ENCODE measurements at regions of chr15 and their contacts with region 1.

Region 1: DNA sequence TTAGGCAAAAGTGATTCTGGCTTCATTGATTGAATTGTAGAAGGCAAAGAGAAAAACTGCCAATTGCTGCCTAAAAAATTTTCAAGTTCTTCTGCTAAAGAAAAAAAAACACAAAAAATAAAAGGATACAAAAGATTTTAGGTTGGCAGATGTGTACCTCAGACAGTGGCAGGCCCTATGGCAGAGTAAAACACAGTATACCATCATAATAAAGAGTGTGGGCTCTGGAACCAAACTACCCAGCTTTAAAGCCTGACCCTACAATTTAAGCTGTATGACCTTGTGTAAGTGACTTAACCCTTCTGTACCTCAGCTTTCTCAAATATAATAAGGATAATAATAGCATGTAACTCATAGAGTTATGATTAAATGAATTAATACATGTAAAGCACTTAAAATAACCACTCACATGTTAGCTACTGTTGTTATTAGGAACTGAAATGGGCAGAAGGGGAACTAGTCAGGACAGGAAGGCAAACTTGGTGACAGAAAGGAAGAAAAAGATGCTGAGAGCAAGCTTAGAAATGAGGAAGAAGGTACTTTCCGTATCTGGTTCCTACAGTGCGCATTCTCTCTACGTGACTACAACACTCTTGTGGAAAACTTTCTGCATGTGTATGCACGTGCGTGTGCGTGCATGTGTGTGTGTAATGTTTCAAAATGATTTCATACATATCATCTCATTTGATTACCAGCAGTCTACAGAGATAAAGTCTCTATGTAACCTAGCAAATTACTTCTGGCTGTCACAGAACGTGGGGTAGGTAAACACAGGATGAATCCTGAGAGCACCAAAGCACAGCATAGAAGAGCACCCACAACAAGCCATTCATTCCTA is 13.6 kb upstream of the GATM start:
- DNase-seq: no peak
- H3K4me3 ChIP-seq: no peak overlapping the region
- H3K27ac ChIP-seq: no peak overlapping the region
- H3K4me1 ChIP-seq: no peaks in the 10 kb centered on the region
- H3K27me3 ChIP-seq: peaks cover 0 to 5% (median 0%) of the 10 kb centered on the region in 4 experiments; a peak in 2 of 7 replicates
- CTCF ChIP-seq: no peak
- EP300 ChIP-seq: no peak
- POLR2A ChIP-seq: no peak
- RAD21 ChIP-seq: no peak

Region 2: GRCh38 chr15:45205192-45205591 is 186.8 kb before region 1 on chr15:
- CTCF ChIA-PET with region 1: interaction called, 97 read pairs
- POLR2A ChIA-PET with region 1: no interaction called
- DNase-seq: peak in 1 of 2 experiments; percentile 77
- H3K4me3 ChIP-seq: no peak overlapping the region
- H3K27ac ChIP-seq: no peak overlapping the region
- H3K4me1 ChIP-seq: no peaks in the 10 kb centered on the region
- H3K27me3 ChIP-seq: no peaks in the 10 kb centered on the region
- CTCF ChIP-seq: peak; percentile 81 to 97 (median 93)
- EP300 ChIP-seq: no peak
- POLR2A ChIP-seq: no peak
- RAD21 ChIP-seq: peak; percentile 95

Region 3: GRCh38 chr15:45314960-45315359 is 77.0 kb before region 1 on chr15:
- CTCF ChIA-PET with region 1: interaction called, 10 read pairs
- POLR2A ChIA-PET with region 1: no interaction called
- DNase-seq: no peak
- H3K4me3 ChIP-seq: no peak overlapping the region; a peak in 1 of 8 replicates
- H3K27ac ChIP-seq: no peak overlapping the region
- H3K4me1 ChIP-seq: no peaks in the 10 kb centered on the region
- H3K27me3 ChIP-seq: no peaks in the 10 kb centered on the region
- CTCF ChIP-seq: peak in 2 of 3 experiments; percentile 36 to 53; a peak in 3 of 4 replicates
- EP300 ChIP-seq: no peak
- POLR2A ChIP-seq: no peak
- RAD21 ChIP-seq: peak; percentile 40 to 58

Region 4: DNA sequence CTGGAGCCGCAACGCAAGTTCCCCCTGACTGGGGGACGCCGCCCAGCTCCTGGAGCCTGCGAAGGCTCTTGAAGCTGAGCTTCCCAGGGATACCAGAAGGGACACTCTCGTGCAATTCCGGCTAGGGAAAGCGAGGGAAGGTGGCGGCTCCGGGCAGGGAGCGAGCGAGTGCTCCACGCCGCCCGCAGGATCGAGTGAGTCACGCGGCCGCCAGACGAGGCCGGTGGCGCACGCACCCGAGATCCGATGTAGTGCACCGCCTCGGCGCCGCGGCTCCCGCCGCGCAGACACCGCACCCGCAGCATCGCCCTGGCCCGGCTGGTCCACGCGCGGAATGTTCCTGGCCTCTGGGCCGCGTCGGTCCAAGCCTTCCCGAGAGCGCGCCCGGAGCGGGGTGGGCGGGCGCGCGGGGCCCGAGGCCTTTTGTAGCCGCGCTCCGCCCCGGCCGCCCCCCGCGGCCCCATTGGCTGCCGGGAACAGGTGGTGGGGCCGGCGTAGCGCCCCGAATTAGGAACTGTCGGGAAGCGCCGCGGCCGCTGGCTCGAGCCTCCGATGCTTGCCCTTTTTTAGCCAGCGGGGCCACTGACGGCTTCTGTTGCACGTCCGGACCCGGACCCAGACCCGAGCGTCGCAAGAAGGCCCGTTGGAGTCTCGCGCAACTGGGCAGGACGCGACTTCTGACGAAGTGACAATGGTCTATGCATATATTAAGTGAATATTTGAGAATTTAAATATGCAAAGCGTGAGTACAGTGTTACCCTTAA is 13.6 kb before region 1 on chr15 and contains the start of gene GATM:
- CTCF ChIA-PET with region 1: interaction called, 60 read pairs
- POLR2A ChIA-PET with region 1: interaction called, 4 read pairs
- DNase-seq: peak in 1 of 2 experiments; percentile 77
- H3K4me3 ChIP-seq: peak within 1 kb of the TSS; percentile 48 to 73 (median 64)
- H3K27ac ChIP-seq: no peak within 1 kb of the TSS
- H3K4me1 ChIP-seq: peaks cover 0 to 2% (median 0%) of the 10 kb centered on the region in 4 experiments; a peak in 2 of 7 replicates
- H3K27me3 ChIP-seq: peaks cover 10 to 40% (median 34%) of the 10 kb centered on the region in 4 experiments
- CTCF ChIP-seq: peak; percentile 42 to 56 (median 45); a peak in 3 of 4 replicates
- EP300 ChIP-seq: no peak
- POLR2A ChIP-seq: peak in 1 of 2 experiments; percentile 64; a peak in 2 of 3 replicates
- RAD21 ChIP-seq: peak in 1 of 2 experiments; percentile 30; a peak in 2 of 4 replicates
- total RNA-seq, gene GATM: 10.0 and 10.2 TPM in 2 replicates

Region 5: DNA sequence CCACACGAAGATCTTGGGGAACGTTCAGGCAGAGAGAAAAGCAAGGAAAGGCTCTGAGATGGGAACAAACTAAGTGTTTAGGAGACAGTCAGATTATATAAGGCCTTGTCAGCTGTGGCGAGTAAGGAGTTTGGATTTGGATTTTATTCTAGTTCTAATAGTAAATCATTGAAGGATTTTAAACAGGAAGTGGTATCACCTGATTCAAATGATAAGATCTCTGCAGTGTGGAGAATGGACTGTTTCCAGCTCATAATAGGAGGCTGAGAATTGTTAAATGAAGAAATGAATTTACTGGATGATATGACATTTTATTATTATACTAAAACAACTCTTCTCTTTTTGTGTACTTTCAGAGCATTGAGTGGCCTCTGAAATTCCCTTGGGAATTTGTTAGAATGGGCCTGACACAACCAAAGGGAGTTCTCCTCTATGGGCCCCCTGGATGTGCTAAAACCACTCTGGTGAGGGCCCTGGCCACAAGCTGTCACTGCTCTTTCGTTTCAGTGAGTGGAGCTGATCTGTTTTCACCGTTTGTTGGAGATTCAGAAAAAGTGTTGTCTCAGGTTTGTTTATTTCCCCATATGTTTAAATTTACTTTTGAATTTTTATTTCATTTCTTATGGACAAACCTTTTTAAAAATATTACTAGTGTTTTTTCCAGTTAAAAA is 22.4 kb after region 1 on chr15:
- CTCF ChIA-PET with region 1: no interaction called
- POLR2A ChIA-PET with region 1: no interaction called
- DNase-seq: no peak
- H3K4me3 ChIP-seq: no peak overlapping the region
- H3K27ac ChIP-seq: no peak overlapping the region
- H3K4me1 ChIP-seq: no peaks in the 10 kb centered on the region
- H3K27me3 ChIP-seq: no peaks in the 10 kb centered on the region
- CTCF ChIP-seq: no peak
- EP300 ChIP-seq: no peak
- POLR2A ChIP-seq: no peak
- RAD21 ChIP-seq: no peak